ENCODE measurements at regions of chr16 and their contacts with region 1.

Region 1: DNA sequence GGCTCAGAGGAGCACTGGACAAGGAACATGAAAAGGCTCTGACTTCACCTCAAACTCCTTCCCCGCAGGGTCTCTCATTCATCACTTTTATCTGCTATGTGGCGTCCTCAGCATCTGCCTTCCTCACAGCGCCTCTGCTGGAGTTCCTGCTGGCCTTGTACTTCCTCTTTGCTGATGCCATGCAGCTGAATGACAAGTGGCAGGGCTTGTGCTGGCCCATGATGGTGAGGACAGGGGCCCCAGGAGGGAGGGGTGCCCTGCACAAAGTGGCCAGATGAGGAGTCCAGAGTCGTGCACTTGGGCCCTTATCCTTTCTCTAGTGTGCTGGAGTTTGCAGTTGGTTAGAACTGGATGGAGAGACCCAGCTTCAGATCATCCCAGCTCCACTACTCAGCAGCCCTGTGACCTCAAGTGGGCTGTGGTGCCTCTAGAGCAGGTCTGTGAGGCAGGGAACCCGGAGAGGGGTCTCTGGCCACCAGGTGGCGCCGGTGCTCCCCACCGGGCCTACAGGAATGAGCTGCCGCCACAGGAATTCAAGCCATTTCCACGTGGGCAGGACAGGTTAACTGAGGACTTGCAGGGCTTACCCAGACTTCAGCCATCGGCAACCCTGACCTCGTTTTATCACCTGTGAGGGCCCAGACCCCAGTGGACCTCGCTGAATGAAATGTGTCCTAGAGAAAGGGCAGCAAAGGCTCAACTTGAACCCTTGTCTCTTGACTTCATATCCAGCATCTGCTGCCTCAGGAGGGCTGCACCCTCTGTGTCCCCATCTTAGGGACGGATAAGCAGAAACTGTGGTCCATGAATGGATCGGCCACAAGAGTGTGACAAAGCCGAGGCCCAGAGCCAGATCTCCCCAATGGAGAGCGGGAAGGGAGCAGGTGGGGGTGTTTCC is 4.0 kb downstream of the CMTM3 start:
- DNase-seq: peak; percentile 66 to 88 (median 82)
- ATAC-seq: peak; percentile 29
- H3K4me3 ChIP-seq: no peak overlapping the region
- H3K4me3 Mint-ChIP-seq: no peak overlapping the region
- H3K27ac ChIP-seq: peak overlapping the region in 1 of 2 experiments; percentile 21
- H3K27ac Mint-ChIP-seq: peak overlapping the region; percentile 60
- H3K4me1 ChIP-seq: peaks cover 24% of the 10 kb centered on the region
- H3K4me1 Mint-ChIP-seq: peaks cover 35% of the 10 kb centered on the region
- H3K27me3 ChIP-seq: no peaks in the 10 kb centered on the region
- H3K27me3 Mint-ChIP-seq: no peaks in the 10 kb centered on the region
- CTCF ChIP-seq: peak; percentile 85

Region 2: GRCh38 chr16:66521951-66522771 is 86.3 kb before region 1 on chr16:
- CTCF ChIA-PET with region 1: interaction called, 3 read pairs
- POLR2A ChIA-PET with region 1: no interaction called
- intact Hi-C with region 1: loop called in 1 of 2 experiments (anchors 2 kb)
- DNase-seq: peak; percentile 17 to 91 (median 85)
- ATAC-seq: peak; percentile 82
- H3K4me3 ChIP-seq: peak overlapping the region in 1 of 2 experiments; percentile 21
- H3K4me3 Mint-ChIP-seq: peak overlapping the region; percentile 66
- H3K27ac ChIP-seq: peak overlapping the region in 1 of 2 experiments; percentile 58
- H3K27ac Mint-ChIP-seq: peak overlapping the region; percentile 95
- H3K4me1 ChIP-seq: peaks cover 72% of the 10 kb centered on the region
- H3K4me1 Mint-ChIP-seq: peaks cover 80% of the 10 kb centered on the region
- H3K27me3 ChIP-seq: no peaks in the 10 kb centered on the region
- H3K27me3 Mint-ChIP-seq: no peaks in the 10 kb centered on the region
- CTCF ChIP-seq: no peak

Region 3: DNA sequence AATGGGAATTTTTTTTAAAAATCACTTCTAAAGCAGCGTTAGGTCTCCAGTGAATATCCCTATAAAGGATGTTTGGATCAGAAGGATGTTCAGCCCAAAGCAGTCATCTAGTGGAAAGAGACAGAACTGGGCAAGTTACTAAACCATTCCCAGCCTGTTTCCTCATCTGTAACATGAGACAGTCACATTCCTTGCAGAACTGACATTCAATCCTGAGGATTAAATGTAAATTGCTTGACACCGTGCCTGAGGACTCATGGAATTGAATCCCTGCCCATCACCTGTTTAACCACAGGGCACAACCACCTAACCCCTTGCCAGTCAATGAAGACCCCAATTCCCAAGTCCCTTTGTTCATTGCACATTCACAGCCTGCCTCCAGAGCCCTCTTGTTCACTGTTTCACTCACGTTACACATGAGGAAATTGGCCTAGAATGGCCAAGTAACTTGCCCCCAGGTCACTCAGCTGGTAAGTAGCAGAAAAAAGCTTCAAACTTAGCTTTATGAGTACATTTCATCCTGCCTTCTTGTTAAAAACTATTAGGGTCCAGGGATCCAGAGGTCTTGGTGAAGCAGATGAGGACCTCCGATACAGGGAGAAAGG is 27.8 kb before region 1 on chr16:
- CTCF ChIA-PET with region 1: interaction called, 11 read pairs
- POLR2A ChIA-PET with region 1: interaction called, 5 read pairs
- intact Hi-C with region 1: no loop called
- DNase-seq: peak in 1 of 9 experiments; percentile 9
- ATAC-seq: no peak
- H3K4me3 ChIP-seq: no peak overlapping the region
- H3K4me3 Mint-ChIP-seq: no peak overlapping the region
- H3K27ac ChIP-seq: no peak overlapping the region
- H3K27ac Mint-ChIP-seq: no peak overlapping the region
- H3K4me1 ChIP-seq: peaks cover 12% of the 10 kb centered on the region
- H3K4me1 Mint-ChIP-seq: peaks cover 14% of the 10 kb centered on the region
- H3K27me3 ChIP-seq: peaks cover 0 to 10% of the 10 kb centered on the region in 2 experiments
- H3K27me3 Mint-ChIP-seq: peaks cover 20% of the 10 kb centered on the region
- CTCF ChIP-seq: no peak

Region 4: GRCh38 chr16:66618588-66619375 is 10.3 kb after region 1 on chr16:
- CTCF ChIA-PET with region 1: interaction called, 24 read pairs
- POLR2A ChIA-PET with region 1: no interaction called
- intact Hi-C with region 1: no loop called
- DNase-seq: no peak
- ATAC-seq: no peak
- H3K4me3 ChIP-seq: no peak overlapping the region
- H3K4me3 Mint-ChIP-seq: no peak overlapping the region
- H3K27ac ChIP-seq: no peak overlapping the region
- H3K27ac Mint-ChIP-seq: no peak overlapping the region
- H3K4me1 ChIP-seq: no peaks in the 10 kb centered on the region
- H3K4me1 Mint-ChIP-seq: peaks cover 2% of the 10 kb centered on the region
- H3K27me3 ChIP-seq: no peaks in the 10 kb centered on the region
- H3K27me3 Mint-ChIP-seq: no peaks in the 10 kb centered on the region
- CTCF ChIP-seq: no peak

Region 5: GRCh38 chr16:66751303-66751991 is 143.0 kb after region 1 on chr16 and contains the start of gene DYNC1LI2:
- CTCF ChIA-PET with region 1: interaction called, 5 read pairs
- POLR2A ChIA-PET with region 1: no interaction called
- intact Hi-C with region 1: loop called in 1 of 2 experiments (anchors 5 kb)
- DNase-seq: peak; percentile 63 to 90 (median 78)
- ATAC-seq: peak; percentile 96
- H3K4me3 ChIP-seq: peak within 1 kb of the TSS; percentile 70 to 90
- H3K4me3 Mint-ChIP-seq: peak within 1 kb of the TSS; percentile 87
- H3K27ac ChIP-seq: peak within 1 kb of the TSS; percentile 67 to 79
- H3K27ac Mint-ChIP-seq: peak within 1 kb of the TSS; percentile 94
- H3K4me1 ChIP-seq: peaks cover 32% of the 10 kb centered on the region
- H3K4me1 Mint-ChIP-seq: peaks cover 43% of the 10 kb centered on the region
- H3K27me3 ChIP-seq: no peaks in the 10 kb centered on the region
- H3K27me3 Mint-ChIP-seq: peaks cover 11% of the 10 kb centered on the region
- CTCF ChIP-seq: peak; percentile 76
- total RNA-seq, gene DYNC1LI2: 102 to 114 TPM

Region 6: DNA sequence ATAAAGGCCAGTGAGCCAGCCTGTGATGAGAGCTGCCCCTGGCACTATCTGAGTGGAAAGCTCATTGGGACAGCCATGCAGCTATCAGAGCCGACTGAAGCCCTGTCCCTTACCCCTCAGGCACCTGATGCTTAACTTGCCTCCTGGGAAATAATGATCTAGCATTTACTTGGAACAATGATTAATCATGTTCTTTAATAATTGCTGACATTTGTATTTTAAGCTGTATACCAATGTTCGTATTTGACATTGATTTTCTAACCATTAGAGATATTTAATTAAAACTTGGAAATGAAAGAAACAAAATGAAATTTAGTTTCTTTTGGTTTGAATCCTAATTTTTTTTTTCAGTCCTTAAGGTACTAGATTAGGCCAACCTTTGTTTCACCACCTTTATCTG is 282.3 kb after region 1 on chr16:
- CTCF ChIA-PET with region 1: no interaction called
- POLR2A ChIA-PET with region 1: no interaction called
- intact Hi-C with region 1: no loop called
- DNase-seq: no peak
- ATAC-seq: no peak
- H3K4me3 ChIP-seq: no peak overlapping the region
- H3K4me3 Mint-ChIP-seq: no peak overlapping the region
- H3K27ac ChIP-seq: no peak overlapping the region
- H3K27ac Mint-ChIP-seq: no peak overlapping the region
- H3K4me1 ChIP-seq: peaks cover 3% of the 10 kb centered on the region
- H3K4me1 Mint-ChIP-seq: peaks cover 18% of the 10 kb centered on the region
- H3K27me3 ChIP-seq: no peaks in the 10 kb centered on the region
- H3K27me3 Mint-ChIP-seq: no peaks in the 10 kb centered on the region
- CTCF ChIP-seq: no peak

Measured in CD8-positive, alpha-beta T cell (primary cell).